B cell (primary cell): ENCODE measurements at regions of chr17 and their contacts with region 1.

Region 1: DNA sequence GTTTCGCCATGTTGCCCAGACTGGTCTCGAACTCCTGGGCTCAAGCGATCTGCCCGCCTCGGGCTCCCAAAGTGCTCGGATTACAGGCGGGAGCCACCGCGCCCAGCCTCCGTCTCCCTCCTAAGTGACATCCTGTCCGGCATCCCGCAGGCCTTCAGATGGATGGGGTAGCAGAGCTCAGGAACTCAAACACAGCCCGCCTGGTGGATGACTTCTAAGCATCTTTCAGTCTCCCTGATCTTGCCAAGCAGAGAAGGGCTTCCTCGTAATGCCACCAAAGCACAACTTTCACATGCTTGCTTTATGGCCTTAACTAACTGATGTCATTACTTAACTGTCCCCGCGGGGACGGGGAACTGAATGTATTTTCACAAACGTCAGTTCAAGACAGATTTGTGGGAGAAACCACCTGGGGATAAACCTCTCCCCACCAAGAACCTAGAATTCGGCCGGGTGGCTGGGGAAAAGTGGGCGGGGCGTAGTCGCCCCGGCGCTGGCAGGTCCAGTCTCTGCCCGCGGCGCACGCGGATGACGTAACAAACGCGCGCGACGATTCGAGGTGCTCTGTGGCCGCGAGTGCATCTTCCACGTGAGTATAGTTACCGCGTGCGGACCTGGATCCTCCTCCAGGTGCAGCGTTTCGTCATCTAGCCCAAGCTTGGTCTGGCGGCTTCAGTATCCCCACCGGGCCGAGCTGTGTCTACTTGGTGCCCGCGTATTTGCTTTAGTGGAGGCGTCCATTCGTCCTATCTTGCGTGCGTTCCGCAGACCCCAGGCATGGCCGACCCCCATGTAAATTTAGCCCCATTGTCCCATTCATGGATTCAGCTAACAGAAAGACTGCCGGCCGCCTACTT is at the start of gene PFAS:
- DNase-seq: peak; percentile 98
- ATAC-seq: peak; percentile 48
- H3K4me3 ChIP-seq: peak within 1 kb of the TSS; percentile 65 to 100 (median 78)
- H3K4me3 Mint-ChIP-seq: peak within 1 kb of the TSS; percentile 96
- H3K27ac ChIP-seq: peak within 1 kb of the TSS; percentile 99 to 100
- H3K27ac Mint-ChIP-seq: peak within 1 kb of the TSS; percentile 100
- H3K4me1 ChIP-seq: peaks cover 29 to 37% of the 10 kb centered on the region in 2 donors
- H3K4me1 Mint-ChIP-seq: peaks cover 44% of the 10 kb centered on the region
- H3K27me3 ChIP-seq: no peaks in the 10 kb centered on the region
- H3K27me3 Mint-ChIP-seq: no peaks in the 10 kb centered on the region
- CTCF ChIP-seq: no peak
- total RNA-seq, gene PFAS: 65.5 and 66.4 TPM in 2 replicates

Region 2: GRCh38 chr17:7204828-7205461 is 1044.0 kb before region 1 on chr17:
- CTCF ChIA-PET with region 1: no interaction called
- POLR2A ChIA-PET with region 1: interaction called, 12 read pairs
- intact Hi-C with region 1: no loop called
- DNase-seq: peak; percentile 99
- ATAC-seq: peak; percentile 85
- H3K4me3 ChIP-seq: peak overlapping the region in 4 of 5 experiments; percentile 49 to 65 (median 55)
- H3K4me3 Mint-ChIP-seq: peak overlapping the region; percentile 82
- H3K27ac ChIP-seq: peak overlapping the region; percentile 86 to 93
- H3K27ac Mint-ChIP-seq: peak overlapping the region; percentile 91
- H3K4me1 ChIP-seq: peaks cover 17 to 25% of the 10 kb centered on the region in 2 donors
- H3K4me1 Mint-ChIP-seq: peaks cover 28% of the 10 kb centered on the region
- H3K27me3 ChIP-seq: no peaks in the 10 kb centered on the region
- H3K27me3 Mint-ChIP-seq: peaks cover under 1% of the 10 kb centered on the region
- CTCF ChIP-seq: no peak

Region 3: DNA sequence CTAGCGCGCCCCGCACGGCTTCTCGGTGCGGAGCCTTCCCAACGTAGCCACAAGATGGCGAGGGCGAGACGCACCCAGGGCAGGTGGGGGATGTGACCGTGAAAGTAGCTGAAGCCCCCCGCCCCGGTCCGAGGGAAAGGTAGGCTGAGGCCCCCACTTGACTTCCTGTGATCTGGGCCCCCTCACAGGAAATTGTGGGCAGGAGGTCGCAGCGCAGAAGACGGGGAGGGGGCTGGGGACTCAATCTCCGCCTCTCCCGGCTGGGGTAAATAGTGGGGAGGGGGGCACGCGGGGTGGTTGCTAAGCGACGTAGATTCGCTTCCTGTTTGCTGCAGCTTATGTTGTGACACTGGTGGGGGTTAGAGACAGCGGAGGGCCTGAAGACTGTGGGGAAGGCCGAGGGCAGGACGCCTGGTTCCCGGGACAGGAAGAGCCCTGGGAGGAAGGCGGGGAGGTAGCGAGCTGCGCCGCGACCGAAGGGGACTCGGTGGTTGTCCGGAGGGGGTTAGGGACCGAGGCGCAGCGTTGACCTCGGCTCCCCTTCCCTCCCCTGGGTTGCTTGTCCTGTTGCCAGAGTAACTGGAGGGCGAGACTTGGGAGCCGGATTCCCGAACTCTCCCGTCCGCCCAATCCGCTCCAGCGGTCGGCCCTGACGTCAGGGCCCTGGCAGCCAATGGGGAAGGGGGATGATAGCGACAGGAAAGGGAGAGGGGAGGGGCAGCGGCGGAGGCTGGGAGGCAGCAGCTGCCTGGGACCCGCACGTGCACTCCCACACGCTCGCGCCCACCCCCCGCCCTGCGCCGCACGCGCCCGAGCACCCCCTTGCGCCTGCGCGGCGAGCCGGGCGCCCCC is 413.8 kb before region 1 on chr17:
- CTCF ChIA-PET with region 1: no interaction called
- POLR2A ChIA-PET with region 1: no interaction called
- intact Hi-C with region 1: no loop called
- DNase-seq: peak; percentile 96
- ATAC-seq: peak; percentile 44
- H3K4me3 ChIP-seq: peak overlapping the region; percentile 42 to 99 (median 95)
- H3K4me3 Mint-ChIP-seq: peak overlapping the region; percentile 99
- H3K27ac ChIP-seq: peak overlapping the region; percentile 93 to 100
- H3K27ac Mint-ChIP-seq: peak overlapping the region; percentile 97
- H3K4me1 ChIP-seq: peaks cover 38 to 56% of the 10 kb centered on the region in 2 donors
- H3K4me1 Mint-ChIP-seq: peaks cover 46% of the 10 kb centered on the region
- H3K27me3 ChIP-seq: peaks cover 0 to 13% (median under 1%) of the 10 kb centered on the region in 4 experiments
- H3K27me3 Mint-ChIP-seq: peaks cover 15% of the 10 kb centered on the region
- CTCF ChIP-seq: peak; percentile 86

Region 4: GRCh38 chr17:8138672-8139371 is 110.2 kb before region 1 on chr17:
- CTCF ChIA-PET with region 1: interaction called, 3 read pairs
- POLR2A ChIA-PET with region 1: interaction called, 11 read pairs
- intact Hi-C with region 1: loop called (anchors 1 kb)
- DNase-seq: peak; percentile 98
- ATAC-seq: peak; percentile 96
- H3K4me3 ChIP-seq: peak overlapping the region; percentile 62 to 84 (median 72)
- H3K4me3 Mint-ChIP-seq: no peak overlapping the region
- H3K27ac ChIP-seq: peak overlapping the region; percentile 84 to 98
- H3K27ac Mint-ChIP-seq: no peak overlapping the region
- H3K4me1 ChIP-seq: peaks cover 10 to 20% of the 10 kb centered on the region in 2 donors
- H3K4me1 Mint-ChIP-seq: peaks cover 2% of the 10 kb centered on the region
- H3K27me3 ChIP-seq: no peaks in the 10 kb centered on the region
- H3K27me3 Mint-ChIP-seq: no peaks in the 10 kb centered on the region
- CTCF ChIP-seq: peak; percentile 94

Region 5: GRCh38 chr17:8189711-8190477 is 59.1 kb before region 1 on chr17 and contains the start of gene BORCS6:
- CTCF ChIA-PET with region 1: interaction called, 5 read pairs
- POLR2A ChIA-PET with region 1: interaction called, 67 read pairs
- intact Hi-C with region 1: loop called (anchors 1 kb)
- DNase-seq: peak; percentile 97
- ATAC-seq: peak; percentile 64
- H3K4me3 ChIP-seq: peak within 1 kb of the TSS; percentile 27 to 97 (median 74)
- H3K4me3 Mint-ChIP-seq: no peak within 1 kb of the TSS
- H3K27ac ChIP-seq: peak within 1 kb of the TSS; percentile 89 to 93
- H3K27ac Mint-ChIP-seq: no peak within 1 kb of the TSS
- H3K4me1 ChIP-seq: peaks cover 36 to 53% of the 10 kb centered on the region in 2 donors
- H3K4me1 Mint-ChIP-seq: peaks cover 11% of the 10 kb centered on the region
- H3K27me3 ChIP-seq: no peaks in the 10 kb centered on the region
- H3K27me3 Mint-ChIP-seq: no peaks in the 10 kb centered on the region
- CTCF ChIP-seq: no peak
- total RNA-seq, gene BORCS6: 18.6 and 20.2 TPM in 2 replicates

Region 6: GRCh38 chr17:8222630-8223356 is 26.2 kb before region 1 on chr17:
- CTCF ChIA-PET with region 1: interaction called, 72 read pairs
- POLR2A ChIA-PET with region 1: interaction called, 158 read pairs
- intact Hi-C with region 1: loop called (anchors 1 kb)
- DNase-seq: peak; percentile 95
- ATAC-seq: peak; percentile 43
- H3K4me3 ChIP-seq: peak overlapping the region; percentile 75 to 100 (median 78)
- H3K4me3 Mint-ChIP-seq: peak overlapping the region; percentile 89
- H3K27ac ChIP-seq: peak overlapping the region; percentile 90 to 93
- H3K27ac Mint-ChIP-seq: peak overlapping the region; percentile 96
- H3K4me1 ChIP-seq: peaks cover 32 to 50% of the 10 kb centered on the region in 2 donors
- H3K4me1 Mint-ChIP-seq: peaks cover 63% of the 10 kb centered on the region
- H3K27me3 ChIP-seq: no peaks in the 10 kb centered on the region
- H3K27me3 Mint-ChIP-seq: no peaks in the 10 kb centered on the region
- CTCF ChIP-seq: no peak

Region 7: GRCh38 chr17:8326511-8327302 is 77.7 kb after region 1 on chr17:
- CTCF ChIA-PET with region 1: no interaction called
- POLR2A ChIA-PET with region 1: no interaction called
- intact Hi-C with region 1: no loop called
- DNase-seq: peak; percentile 46
- ATAC-seq: peak; percentile 41
- H3K4me3 ChIP-seq: peak overlapping the region in 4 of 5 experiments; percentile 19 to 50 (median 35)
- H3K4me3 Mint-ChIP-seq: peak overlapping the region; percentile 65
- H3K27ac ChIP-seq: no peak overlapping the region
- H3K27ac Mint-ChIP-seq: no peak overlapping the region
- H3K4me1 ChIP-seq: peaks cover 15 to 24% of the 10 kb centered on the region in 2 donors
- H3K4me1 Mint-ChIP-seq: peaks cover 19% of the 10 kb centered on the region
- H3K27me3 ChIP-seq: peaks cover 0 to 45% (median 17%) of the 10 kb centered on the region in 4 experiments
- H3K27me3 Mint-ChIP-seq: peaks cover 44% of the 10 kb centered on the region
- CTCF ChIP-seq: no peak

Region 8: DNA sequence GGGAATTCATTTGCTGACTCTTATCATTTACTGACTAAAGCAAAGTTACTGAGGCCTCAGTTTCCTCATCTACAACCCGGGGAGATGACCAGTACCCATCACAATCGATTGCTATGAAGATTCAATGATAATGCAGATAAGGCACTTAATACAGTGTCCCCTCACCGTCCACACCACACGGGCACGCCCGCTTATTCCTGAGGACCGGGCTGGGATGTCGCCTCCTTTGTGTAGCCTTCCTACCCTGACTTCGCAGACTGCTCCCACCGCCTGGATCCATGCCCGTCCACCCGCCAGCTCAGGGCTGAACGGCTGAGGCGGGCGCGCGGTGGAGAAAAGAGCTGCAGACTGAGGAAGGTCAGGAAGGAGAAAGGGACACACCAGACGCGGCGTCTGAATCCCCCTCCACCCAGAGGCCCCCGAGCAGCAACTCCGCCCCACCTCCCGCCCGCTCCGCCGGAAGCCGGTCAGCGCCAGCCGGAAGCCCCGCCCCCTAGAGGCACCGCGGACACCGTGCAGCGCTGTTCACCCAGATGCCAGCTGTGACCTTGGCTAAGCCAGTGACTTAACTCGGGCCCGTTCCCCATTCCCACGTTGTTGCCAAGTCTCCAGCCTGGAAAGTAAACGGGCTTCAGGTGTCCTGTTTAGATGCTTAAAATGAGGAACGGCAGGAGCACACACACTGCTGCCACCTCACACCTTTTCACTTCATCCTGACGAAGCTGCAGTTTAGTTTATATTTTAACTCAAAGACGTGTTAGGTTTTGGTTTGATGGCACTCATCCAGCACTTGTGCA is 127.5 kb after region 1 on chr17 and contains the start of gene KRABD2:
- CTCF ChIA-PET with region 1: interaction called, 4 read pairs
- POLR2A ChIA-PET with region 1: no interaction called
- intact Hi-C with region 1: loop called (anchors 2 kb)
- DNase-seq: peak; percentile 90
- ATAC-seq: peak; percentile 100
- H3K4me3 ChIP-seq: peak within 1 kb of the TSS; percentile 81 to 92 (median 87)
- H3K4me3 Mint-ChIP-seq: peak within 1 kb of the TSS; percentile 92
- H3K27ac ChIP-seq: peak within 1 kb of the TSS; percentile 53 to 86
- H3K27ac Mint-ChIP-seq: peak within 1 kb of the TSS; percentile 91
- H3K4me1 ChIP-seq: peaks cover 31 to 33% of the 10 kb centered on the region in 2 donors
- H3K4me1 Mint-ChIP-seq: peaks cover 48% of the 10 kb centered on the region
- H3K27me3 ChIP-seq: no peaks in the 10 kb centered on the region
- H3K27me3 Mint-ChIP-seq: no peaks in the 10 kb centered on the region
- CTCF ChIP-seq: peak; percentile 76